ENCODE measurements at regions of chr10 and their contacts with region 1.

Region 1: DNA sequence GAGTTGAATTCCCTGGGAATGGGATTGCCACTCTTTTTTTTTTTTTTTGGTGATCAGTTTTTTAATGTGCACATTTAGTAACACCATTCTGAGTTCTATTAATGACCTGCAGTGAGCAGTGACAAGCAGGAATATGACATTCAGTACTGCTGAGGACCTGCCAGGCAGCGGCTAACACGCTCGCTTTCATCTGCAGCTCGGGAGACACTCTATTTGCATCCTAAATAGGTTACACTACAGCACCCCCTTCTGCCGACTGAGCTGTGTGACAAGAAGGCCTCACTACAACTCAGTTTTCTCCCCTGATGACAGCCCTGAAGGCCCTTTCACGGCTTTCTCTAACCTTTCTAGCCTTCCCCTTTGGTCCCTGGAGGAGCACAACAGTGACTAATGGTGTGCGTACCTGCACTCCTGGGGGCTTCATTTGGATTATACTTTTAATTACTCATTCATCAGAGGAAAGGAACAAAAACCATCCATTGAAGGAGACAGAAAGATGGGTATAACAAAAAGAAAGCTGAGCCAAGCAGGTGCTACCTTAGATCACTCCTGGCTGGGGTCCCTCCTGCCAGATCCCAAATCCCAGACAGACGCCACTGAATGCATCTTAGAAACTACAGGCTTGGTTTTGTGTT is 872.4 kb downstream of the LRMDA start:
- DNase-seq: peak in 7 of 14 experiments; percentile 7 to 34 (median 20)
- ATAC-seq: peak; percentile 56
- H3K4me3 ChIP-seq: no peak overlapping the region
- H3K4me3 Mint-ChIP-seq: no peak overlapping the region
- H3K27ac ChIP-seq: no peak overlapping the region
- H3K27ac Mint-ChIP-seq: no peak overlapping the region
- H3K4me1 ChIP-seq: no peaks in the 10 kb centered on the region
- H3K4me1 Mint-ChIP-seq: peaks cover 6% of the 10 kb centered on the region
- H3K27me3 ChIP-seq: no peaks in the 10 kb centered on the region
- H3K27me3 Mint-ChIP-seq: peaks cover 14% of the 10 kb centered on the region
- CTCF ChIP-seq: no peak

Region 2: DNA sequence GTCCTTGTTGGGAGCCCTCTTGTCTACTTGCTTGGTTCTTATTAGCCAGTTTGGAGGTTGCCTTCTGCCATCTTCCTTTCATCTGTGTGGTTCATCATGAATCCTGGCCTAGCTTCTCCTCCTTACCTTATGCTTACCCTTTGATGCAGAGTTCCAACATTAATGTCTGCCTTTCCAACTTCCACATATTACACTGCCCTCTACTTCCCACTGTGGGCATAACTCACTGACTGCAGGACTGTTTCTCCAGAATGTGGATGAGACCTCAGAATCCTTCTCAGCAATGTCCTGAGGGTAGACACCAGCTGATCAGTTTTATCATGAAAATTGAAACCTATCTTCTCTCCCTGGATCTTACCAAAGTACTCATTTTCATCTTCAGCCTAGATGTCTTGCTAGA is 381.4 kb before region 1 on chr10:
- CTCF ChIA-PET with region 1: no interaction called
- POLR2A ChIA-PET with region 1: no interaction called
- intact Hi-C with region 1: no loop called
- DNase-seq: no peak
- ATAC-seq: no peak
- H3K4me3 ChIP-seq: no peak overlapping the region
- H3K4me3 Mint-ChIP-seq: no peak overlapping the region
- H3K27ac ChIP-seq: no peak overlapping the region
- H3K27ac Mint-ChIP-seq: no peak overlapping the region
- H3K4me1 ChIP-seq: no peaks in the 10 kb centered on the region
- H3K4me1 Mint-ChIP-seq: no peaks in the 10 kb centered on the region
- H3K27me3 ChIP-seq: no peaks in the 10 kb centered on the region
- H3K27me3 Mint-ChIP-seq: no peaks in the 10 kb centered on the region
- CTCF ChIP-seq: no peak

Region 3: DNA sequence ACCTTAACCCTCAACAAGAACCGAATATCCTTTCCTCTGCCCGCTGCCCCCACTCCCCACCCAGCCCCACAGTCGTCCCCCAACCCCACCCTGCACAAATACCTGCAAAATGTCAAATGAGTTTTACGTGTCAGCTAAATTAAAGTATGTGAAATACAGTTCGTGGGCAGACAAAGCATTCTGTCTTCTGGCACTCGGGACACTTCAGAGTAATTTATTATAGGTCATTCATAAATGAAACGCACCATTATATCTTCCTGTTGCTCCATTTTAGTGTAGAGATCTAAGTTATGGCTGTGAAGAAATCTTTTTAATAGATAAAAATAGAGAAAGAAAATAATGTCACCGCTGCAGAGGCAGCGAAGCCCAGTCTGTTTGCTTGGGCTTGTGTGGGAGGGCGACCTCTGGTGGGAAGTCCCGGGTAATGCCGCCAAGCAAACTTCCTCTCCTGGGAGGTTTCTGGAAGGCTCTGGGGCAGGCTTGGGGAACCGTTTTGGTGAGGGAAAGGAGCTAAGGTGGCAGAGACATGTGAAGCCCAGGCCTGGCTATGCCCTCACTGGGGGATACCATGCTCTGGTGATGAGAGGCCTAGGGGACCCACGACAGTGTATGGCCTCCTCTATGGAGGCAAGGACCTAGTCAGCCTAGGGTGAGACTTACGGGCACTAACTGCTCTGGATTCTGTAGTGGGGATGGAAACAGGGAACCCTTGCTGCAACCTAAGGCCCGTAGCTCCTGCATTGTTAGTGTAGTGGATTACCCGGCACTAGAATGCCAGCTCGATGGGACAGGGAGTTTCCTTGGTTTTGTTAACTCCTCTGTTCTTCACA is 267.5 kb before region 1 on chr10:
- CTCF ChIA-PET with region 1: no interaction called
- POLR2A ChIA-PET with region 1: no interaction called
- intact Hi-C with region 1: loop called in 1 of 2 experiments (anchors 5 kb)
- DNase-seq: peak in 11 of 14 experiments; percentile 4 to 54 (median 17)
- ATAC-seq: no peak
- H3K4me3 ChIP-seq: no peak overlapping the region
- H3K4me3 Mint-ChIP-seq: no peak overlapping the region
- H3K27ac ChIP-seq: no peak overlapping the region
- H3K27ac Mint-ChIP-seq: no peak overlapping the region
- H3K4me1 ChIP-seq: no peaks in the 10 kb centered on the region
- H3K4me1 Mint-ChIP-seq: peaks cover 4% of the 10 kb centered on the region
- H3K27me3 ChIP-seq: peaks cover 0 to 2% of the 10 kb centered on the region in 2 experiments
- H3K27me3 Mint-ChIP-seq: peaks cover 9% of the 10 kb centered on the region
- CTCF ChIP-seq: peak; percentile 53

Region 4: GRCh38 chr10:76209135-76209534 is 94.7 kb before region 1 on chr10:
- CTCF ChIA-PET with region 1: no interaction called
- POLR2A ChIA-PET with region 1: no interaction called
- intact Hi-C with region 1: no loop called
- DNase-seq: no peak
- ATAC-seq: no peak
- H3K4me3 ChIP-seq: no peak overlapping the region
- H3K4me3 Mint-ChIP-seq: no peak overlapping the region
- H3K27ac ChIP-seq: no peak overlapping the region
- H3K27ac Mint-ChIP-seq: no peak overlapping the region
- H3K4me1 ChIP-seq: no peaks in the 10 kb centered on the region
- H3K4me1 Mint-ChIP-seq: no peaks in the 10 kb centered on the region
- H3K27me3 ChIP-seq: no peaks in the 10 kb centered on the region
- H3K27me3 Mint-ChIP-seq: no peaks in the 10 kb centered on the region
- CTCF ChIP-seq: no peak

Region 5: GRCh38 chr10:76403912-76404311 is 100.1 kb after region 1 on chr10:
- CTCF ChIA-PET with region 1: no interaction called
- POLR2A ChIA-PET with region 1: no interaction called
- intact Hi-C with region 1: no loop called
- DNase-seq: peak in 2 of 14 experiments; percentile 53 to 66
- ATAC-seq: no peak
- H3K4me3 ChIP-seq: no peak overlapping the region
- H3K4me3 Mint-ChIP-seq: no peak overlapping the region
- H3K27ac ChIP-seq: no peak overlapping the region
- H3K27ac Mint-ChIP-seq: no peak overlapping the region
- H3K4me1 ChIP-seq: no peaks in the 10 kb centered on the region
- H3K4me1 Mint-ChIP-seq: no peaks in the 10 kb centered on the region
- H3K27me3 ChIP-seq: no peaks in the 10 kb centered on the region
- H3K27me3 Mint-ChIP-seq: no peaks in the 10 kb centered on the region
- CTCF ChIP-seq: no peak